A673 (cell line): ENCODE measurements at regions of chr19 and their contacts with region 1.

Region 1: DNA sequence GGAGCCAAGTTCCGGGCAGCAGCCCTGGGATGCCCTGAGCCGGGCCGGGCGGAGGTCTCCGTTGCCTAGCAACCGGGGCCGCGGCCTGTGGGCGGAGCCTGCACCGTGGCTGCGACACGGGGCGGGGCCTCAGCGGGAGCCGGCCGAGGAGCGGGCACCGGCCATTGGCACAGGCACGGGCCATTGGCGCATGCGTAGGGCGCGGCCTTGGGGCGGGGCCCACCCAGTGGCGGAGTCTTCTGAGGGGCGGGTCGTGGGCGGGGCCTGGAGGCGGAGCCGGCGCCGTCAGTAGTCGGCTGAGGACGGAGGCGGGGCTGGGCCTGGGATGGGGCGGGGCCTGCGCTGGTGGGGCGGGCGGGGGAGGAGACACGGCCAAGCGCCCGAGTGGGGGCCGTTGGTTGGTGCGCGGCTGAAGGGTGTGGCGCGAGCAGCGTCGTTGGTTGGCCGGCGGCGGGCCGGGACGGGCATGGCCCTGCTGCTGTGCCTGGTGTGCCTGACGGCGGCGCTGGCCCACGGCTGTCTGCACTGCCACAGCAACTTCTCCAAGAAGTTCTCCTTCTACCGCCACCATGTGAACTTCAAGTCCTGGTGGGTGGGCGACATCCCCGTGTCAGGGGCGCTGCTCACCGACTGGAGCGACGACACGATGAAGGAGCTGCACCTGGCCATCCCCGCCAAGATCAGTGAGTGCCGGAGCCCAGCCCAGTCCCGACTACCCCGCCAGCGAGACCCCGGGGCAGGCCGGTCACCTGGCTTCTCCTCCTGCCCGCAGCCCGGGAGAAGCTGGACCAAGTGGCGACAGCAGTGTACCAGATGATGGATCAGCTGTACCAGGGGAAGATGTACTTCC is at the start of gene IZUMO4:
- DNase-seq: peak; percentile 96
- H3K4me3 ChIP-seq: peak within 1 kb of the TSS; percentile 92
- H3K27ac ChIP-seq: peak within 1 kb of the TSS; percentile 90
- H3K4me1 ChIP-seq: peaks cover 17% of the 10 kb centered on the region
- H3K27me3 ChIP-seq: no peaks in the 10 kb centered on the region
- CTCF ChIP-seq: peak; percentile 58
- total RNA-seq, gene IZUMO4: 1.6 and 2.5 TPM in 2 replicates

Region 2: GRCh38 chr19:2084993-2085720 is 11.5 kb before region 1 on chr19:
- CTCF ChIA-PET with region 1: no interaction called
- POLR2A ChIA-PET with region 1: no interaction called
- intact Hi-C with region 1: no loop called
- DNase-seq: peak; percentile 55
- H3K4me3 ChIP-seq: no peak overlapping the region
- H3K27ac ChIP-seq: no peak overlapping the region
- H3K4me1 ChIP-seq: peaks cover 13% of the 10 kb centered on the region
- H3K27me3 ChIP-seq: no peaks in the 10 kb centered on the region
- CTCF ChIP-seq: no peak

Region 3: GRCh38 chr19:2536461-2536860 is 439.8 kb after region 1 on chr19:
- CTCF ChIA-PET with region 1: no interaction called
- POLR2A ChIA-PET with region 1: interaction called, 10 read pairs
- intact Hi-C with region 1: no loop called
- DNase-seq: no peak
- H3K4me3 ChIP-seq: no peak overlapping the region
- H3K27ac ChIP-seq: peak overlapping the region; percentile 37
- H3K4me1 ChIP-seq: peaks cover 5% of the 10 kb centered on the region
- H3K27me3 ChIP-seq: no peaks in the 10 kb centered on the region
- CTCF ChIP-seq: no peak